ENCODE measurements at regions of chr1 and their contacts with region 1.

Region 1: DNA sequence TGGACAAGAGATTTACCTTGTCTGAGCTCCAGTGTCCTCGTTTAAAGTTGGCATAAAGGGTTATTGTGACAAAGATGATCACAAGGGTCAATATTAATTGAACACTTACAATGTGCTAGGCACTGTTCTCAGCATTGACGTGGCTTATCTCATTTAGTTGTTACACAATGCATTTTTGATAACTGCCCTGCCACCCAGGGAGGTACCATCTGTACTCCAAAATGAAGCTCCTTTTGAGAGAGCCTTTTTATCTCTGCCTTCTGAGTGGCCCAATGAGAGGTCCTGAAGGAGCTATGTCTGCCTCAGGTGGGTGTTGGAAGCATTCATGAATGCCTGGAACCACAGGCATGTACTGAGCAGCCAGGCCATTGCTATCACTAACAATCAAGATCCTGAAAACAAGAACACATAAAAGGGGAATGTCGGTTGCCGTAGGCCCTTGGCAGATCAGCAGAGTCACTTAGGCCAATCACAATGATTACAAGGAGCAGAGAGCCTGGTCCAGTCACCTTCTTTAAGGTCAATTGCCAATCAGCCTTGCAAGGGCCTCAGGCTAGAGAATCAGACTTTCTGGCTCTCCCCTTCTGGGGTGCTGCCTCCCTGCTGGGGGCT is 78.5 kb downstream of the NMNAT2 start:
- DNase-seq: no peak
- ATAC-seq: no peak

Region 2: DNA sequence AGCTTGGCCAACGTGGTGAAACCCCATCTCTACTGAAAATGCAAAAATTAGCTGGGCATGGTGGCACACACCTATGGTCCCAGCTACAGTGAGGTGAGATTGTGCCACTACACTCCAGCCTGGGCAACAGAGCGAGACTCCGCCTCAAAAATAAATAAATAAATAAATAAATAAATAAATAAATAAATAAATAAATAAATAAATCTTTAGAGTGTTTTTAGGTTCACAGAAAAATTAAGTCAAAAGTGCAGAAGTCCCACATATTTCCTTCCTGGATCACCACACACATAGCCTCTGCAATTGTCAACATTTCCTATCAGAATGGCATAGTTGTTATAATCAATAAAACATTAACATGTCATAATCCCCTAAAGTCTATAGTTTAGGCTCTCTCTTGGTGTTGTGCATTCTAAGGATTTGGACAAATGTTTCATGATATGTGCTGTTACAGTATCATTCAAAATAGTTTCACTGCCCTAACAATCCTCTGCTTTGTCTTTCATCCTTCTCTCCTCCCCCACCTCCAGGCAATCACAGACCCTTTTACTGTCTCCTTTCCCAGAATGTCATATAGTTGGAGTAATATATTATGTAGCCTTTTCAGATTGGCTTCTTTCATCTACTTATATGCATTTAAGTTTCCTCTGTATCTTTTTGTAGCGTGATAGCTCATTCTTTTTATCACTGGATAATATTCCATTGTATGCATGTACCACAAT is 258.1 kb before region 1 on chr1:
- intact Hi-C with region 1: loop called (anchors 2 kb)
- DNase-seq: no peak
- ATAC-seq: no peak

Region 3: DNA sequence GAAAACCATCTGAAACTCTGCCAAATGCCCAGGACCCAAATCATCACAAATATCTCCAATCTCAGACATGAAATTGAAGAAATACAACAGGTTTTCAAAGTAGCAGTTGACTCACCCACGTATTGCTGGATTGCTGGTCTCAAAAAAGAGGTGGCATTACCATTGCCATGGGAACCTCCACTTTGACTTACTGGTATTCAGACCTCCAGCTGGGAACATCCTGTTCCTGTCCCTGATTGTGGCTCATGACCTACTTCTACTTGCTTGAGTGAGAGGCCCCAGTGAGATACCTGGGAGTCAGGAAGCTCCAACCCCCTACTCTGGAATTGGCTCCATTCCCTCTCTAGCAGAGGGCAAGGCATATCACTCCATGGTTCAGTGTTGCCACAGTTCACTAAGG is 13.9 kb after region 1 on chr1:
- intact Hi-C with region 1: no loop called
- DNase-seq: no peak
- ATAC-seq: no peak

Measured in sciatic nerve (tissue), 2 donors.